ENCODE measurements at regions of chr12 and their contacts with region 1.

Region 1: GRCh38 chr12:88969127-88969526 is 383.2 kb downstream of the DUSP6 start:
- DNase-seq: no peak
- H3K4me3 ChIP-seq: no peak overlapping the region
- H3K27ac ChIP-seq: no peak overlapping the region
- H3K4me1 ChIP-seq: no peaks in the 10 kb centered on the region
- H3K27me3 ChIP-seq: no peaks in the 10 kb centered on the region
- CTCF ChIP-seq: no peak
- POLR2A ChIP-seq: no peak

Region 2: GRCh38 chr12:88339254-88339949 is 629.7 kb before region 1 on chr12:
- CTCF ChIA-PET with region 1: no interaction called
- POLR2A ChIA-PET with region 1: no interaction called
- dilution Hi-C with region 1: no loop called
- intact Hi-C with region 1: no loop called
- DNase-seq: no peak
- H3K4me3 ChIP-seq: no peak overlapping the region
- H3K27ac ChIP-seq: no peak overlapping the region
- H3K4me1 ChIP-seq: no peaks in the 10 kb centered on the region
- H3K27me3 ChIP-seq: no peaks in the 10 kb centered on the region
- CTCF ChIP-seq: no peak
- POLR2A ChIP-seq: no peak

Region 3: GRCh38 chr12:88865537-88865936 is 103.6 kb before region 1 on chr12:
- CTCF ChIA-PET with region 1: no interaction called
- POLR2A ChIA-PET with region 1: no interaction called
- dilution Hi-C with region 1: no loop called
- intact Hi-C with region 1: no loop called
- DNase-seq: no peak
- H3K4me3 ChIP-seq: no peak overlapping the region
- H3K27ac ChIP-seq: no peak overlapping the region
- H3K4me1 ChIP-seq: no peaks in the 10 kb centered on the region
- H3K27me3 ChIP-seq: no peaks in the 10 kb centered on the region
- CTCF ChIP-seq: no peak
- POLR2A ChIP-seq: no peak

Region 4: DNA sequence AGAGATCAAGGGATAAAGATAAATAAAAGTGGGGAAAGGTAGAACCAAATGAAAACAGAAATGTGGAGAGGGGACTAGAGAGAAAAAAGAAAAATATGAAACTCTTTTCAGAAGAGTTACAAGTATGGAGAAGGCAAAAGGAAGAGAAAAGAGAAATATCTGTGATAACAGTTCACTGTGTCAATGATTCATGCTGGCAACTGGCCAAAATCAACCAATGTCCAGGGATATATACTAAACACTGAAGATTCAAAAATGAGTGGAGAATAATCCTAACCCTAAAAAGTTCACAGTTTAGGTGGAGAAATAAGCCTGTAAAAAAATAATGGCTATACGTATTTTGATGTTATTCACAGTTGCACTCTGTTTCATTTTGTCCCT is 16.6 kb before region 1 on chr12:
- CTCF ChIA-PET with region 1: interaction called, 10 read pairs
- POLR2A ChIA-PET with region 1: no interaction called
- dilution Hi-C with region 1: no loop called
- intact Hi-C with region 1: no loop called
- DNase-seq: peak; percentile 82
- H3K4me3 ChIP-seq: no peak overlapping the region
- H3K27ac ChIP-seq: no peak overlapping the region
- H3K4me1 ChIP-seq: peaks cover 19% of the 10 kb centered on the region
- H3K27me3 ChIP-seq: no peaks in the 10 kb centered on the region
- CTCF ChIP-seq: no peak
- POLR2A ChIP-seq: no peak

Measured in endothelial cell of umbilical vein (primary cell).